A549 (cell line): ENCODE measurements at regions of chr20 and their contacts with region 1.

Region 1: DNA sequence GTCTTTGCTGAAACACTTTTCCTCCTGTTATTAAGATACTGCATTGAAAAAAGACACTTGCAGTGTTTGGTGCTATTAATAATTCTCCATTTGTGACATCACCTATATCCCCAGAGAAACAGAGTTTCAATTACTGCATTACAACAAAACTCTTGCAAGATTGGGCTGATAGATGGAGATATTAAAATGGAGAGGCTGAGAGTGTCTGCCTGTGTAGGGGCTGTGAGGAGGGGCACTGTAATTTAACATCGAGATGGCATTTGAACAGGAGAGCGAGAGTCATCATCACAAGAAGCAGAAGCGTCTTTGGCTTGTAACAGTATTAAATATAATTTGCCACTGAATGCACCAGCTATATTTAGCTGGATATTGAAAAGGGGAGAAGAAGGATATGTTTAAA is 316.5 kb downstream of the CDH26 start:
- DNase-seq: no peak
- ATAC-seq: no peak
- H3K4me3 ChIP-seq: no peak overlapping the region
- H3K27ac ChIP-seq: no peak overlapping the region
- H3K4me1 ChIP-seq: no peaks in the 10 kb centered on the region
- CTCF ChIP-seq: no peak
- EP300 ChIP-seq: no peak
- POLR2A ChIP-seq: no peak
- RAD21 ChIP-seq: no peak

Region 2: GRCh38 chr20:59895908-59896307 is 378.8 kb before region 1 on chr20:
- CTCF ChIA-PET with region 1: no interaction called
- POLR2A ChIA-PET with region 1: no interaction called
- DNase-seq: no peak
- ATAC-seq: no peak
- H3K4me3 ChIP-seq: no peak overlapping the region
- H3K27ac ChIP-seq: no peak overlapping the region
- H3K4me1 ChIP-seq: no peaks in the 10 kb centered on the region
- CTCF ChIP-seq: no peak
- EP300 ChIP-seq: no peak
- POLR2A ChIP-seq: no peak
- RAD21 ChIP-seq: no peak

Region 3: GRCh38 chr20:60249436-60249835 is 25.3 kb before region 1 on chr20:
- CTCF ChIA-PET with region 1: no interaction called
- POLR2A ChIA-PET with region 1: no interaction called
- DNase-seq: peak; percentile 60 to 61
- ATAC-seq: peak; percentile 83 to 96
- H3K4me3 ChIP-seq: no peak overlapping the region
- H3K27ac ChIP-seq: no peak overlapping the region
- H3K4me1 ChIP-seq: peaks cover 5% of the 10 kb centered on the region; the same call in 2 of the 3 replicates
- CTCF ChIP-seq: no peak
- EP300 ChIP-seq: no peak
- POLR2A ChIP-seq: no peak
- RAD21 ChIP-seq: no peak

Region 4: GRCh38 chr20:60262967-60263603 is 11.6 kb before region 1 on chr20:
- CTCF ChIA-PET with region 1: interaction called, 10 read pairs
- POLR2A ChIA-PET with region 1: no interaction called
- DNase-seq: peak; percentile 21 to 30
- ATAC-seq: peak in 1 of 2 experiments; percentile 58; a peak in 2 of 6 replicates
- H3K4me3 ChIP-seq: no peak overlapping the region
- H3K27ac ChIP-seq: no peak overlapping the region
- H3K4me1 ChIP-seq: no peaks in the 10 kb centered on the region
- CTCF ChIP-seq: peak; percentile 40; the same call in 2 of the 3 replicates
- EP300 ChIP-seq: no peak
- POLR2A ChIP-seq: no peak
- RAD21 ChIP-seq: peak in 1 of 2 experiments; percentile 43; a peak in 2 of 5 replicates

Region 5: GRCh38 chr20:60528141-60528540 is 253.4 kb after region 1 on chr20:
- CTCF ChIA-PET with region 1: no interaction called
- POLR2A ChIA-PET with region 1: no interaction called
- DNase-seq: no peak
- ATAC-seq: no peak
- H3K4me3 ChIP-seq: no peak overlapping the region
- H3K27ac ChIP-seq: no peak overlapping the region
- H3K4me1 ChIP-seq: no peaks in the 10 kb centered on the region
- CTCF ChIP-seq: no peak
- EP300 ChIP-seq: no peak
- POLR2A ChIP-seq: no peak
- RAD21 ChIP-seq: no peak